ENCODE measurements at regions of chr5 and their contacts with region 1.

Region 1: GRCh38 chr5:77844623-77845323 is 68.6 kb upstream of the TBCA start:
- DNase-seq: no peak
- H3K4me3 Mint-ChIP-seq: no peak overlapping the region
- H3K27ac Mint-ChIP-seq: no peak overlapping the region
- H3K4me1 Mint-ChIP-seq: peaks cover 12% of the 10 kb centered on the region
- H3K27me3 Mint-ChIP-seq: no peaks in the 10 kb centered on the region
- CTCF ChIP-seq: no peak

Region 2: DNA sequence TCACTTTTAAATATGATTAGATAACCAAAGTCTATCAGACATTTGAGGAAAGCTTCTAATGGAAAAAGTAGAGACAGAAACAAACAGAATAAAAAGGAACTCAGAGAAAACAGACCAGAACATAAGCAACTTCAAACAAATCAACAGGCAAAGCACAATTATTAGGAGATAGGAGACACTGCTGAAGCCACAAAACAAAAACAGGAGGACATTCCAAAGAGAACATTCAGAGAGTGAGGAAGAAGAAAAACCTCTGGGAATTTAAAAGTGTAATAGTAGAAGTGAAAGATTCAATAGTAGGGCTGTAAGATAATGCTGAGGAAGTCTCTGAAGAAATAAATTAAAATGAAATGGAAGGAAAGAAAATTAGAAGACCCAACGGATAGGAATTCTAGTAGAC is 14.5 kb after region 1 on chr5:
- CTCF ChIA-PET with region 1: interaction called, 11 read pairs
- POLR2A ChIA-PET with region 1: interaction called, 3 read pairs
- intact Hi-C with region 1: no loop called
- DNase-seq: no peak
- H3K4me3 Mint-ChIP-seq: no peak overlapping the region
- H3K27ac Mint-ChIP-seq: no peak overlapping the region
- H3K4me1 Mint-ChIP-seq: no peaks in the 10 kb centered on the region
- H3K27me3 Mint-ChIP-seq: no peaks in the 10 kb centered on the region
- CTCF ChIP-seq: no peak

Measured in MCF 10A (cell line).